CD4-positive, alpha-beta memory T cell (primary cell): ENCODE measurements at regions of chr17 and their contacts with region 1.

Region 1: GRCh38 chr17:40303009-40303657 is 5.8 kb upstream of the RARA start:
- DNase-seq: peak; percentile 62 to 70 (median 66)
- H3K4me3 ChIP-seq: no peak overlapping the region
- H3K4me3 Mint-ChIP-seq: no peak overlapping the region
- H3K27ac ChIP-seq: no peak overlapping the region
- H3K27ac Mint-ChIP-seq: peak overlapping the region in 5 of 7 donors; percentile 2 to 53 (median 13)
- H3K4me1 ChIP-seq: peaks cover 37% of the 10 kb centered on the region
- H3K4me1 Mint-ChIP-seq: peaks cover 14 to 17% (median 15%) of the 10 kb centered on the region in 4 donors
- H3K27me3 ChIP-seq: no peaks in the 10 kb centered on the region
- H3K27me3 Mint-ChIP-seq: no peaks in the 10 kb centered on the region

Region 2: DNA sequence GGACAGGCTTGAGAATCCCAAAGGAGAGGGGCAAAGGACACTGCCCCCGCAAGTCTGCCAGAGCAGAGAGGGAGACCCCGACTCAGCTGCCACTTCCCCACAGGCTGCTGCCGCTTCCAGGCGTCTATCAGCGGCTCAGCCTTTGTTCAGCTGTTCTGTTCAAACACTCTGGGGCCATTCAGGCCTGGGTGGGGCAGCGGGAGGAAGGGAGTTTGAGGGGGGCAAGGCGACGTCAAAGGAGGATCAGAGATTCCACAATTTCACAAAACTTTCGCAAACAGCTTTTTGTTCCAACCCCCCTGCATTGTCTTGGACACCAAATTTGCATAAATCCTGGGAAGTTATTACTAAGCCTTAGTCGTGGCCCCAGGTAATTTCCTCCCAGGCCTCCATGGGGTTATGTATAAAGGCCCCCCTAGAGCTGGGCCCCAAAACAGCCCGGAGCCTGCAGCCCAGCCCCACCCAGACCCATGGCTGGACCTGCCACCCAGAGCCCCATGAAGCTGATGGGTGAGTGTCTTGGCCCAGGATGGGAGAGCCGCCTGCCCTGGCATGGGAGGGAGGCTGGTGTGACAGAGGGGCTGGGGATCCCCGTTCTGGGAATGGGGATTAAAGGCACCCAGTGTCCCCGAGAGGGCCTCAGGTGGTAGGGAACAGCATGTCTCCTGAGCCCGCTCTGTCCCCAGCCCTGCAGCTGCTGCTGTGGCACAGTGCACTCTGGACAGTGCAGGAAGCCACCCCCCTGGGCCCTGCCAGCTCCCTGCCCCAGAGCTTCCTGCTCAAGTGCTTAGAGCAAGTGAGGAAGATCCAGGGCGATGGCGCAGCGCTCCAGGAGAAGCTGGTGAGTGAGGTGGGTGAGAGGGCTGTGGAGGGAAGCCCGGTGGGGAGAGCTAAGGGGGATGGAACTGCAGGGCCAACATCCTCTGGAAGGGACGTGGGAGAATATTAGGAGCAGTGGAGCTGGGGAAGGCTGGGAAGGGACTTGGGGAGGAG is 287.8 kb before region 1 on chr17 and contains the start of gene CSF3:
- CTCF ChIA-PET with region 1: no interaction called
- POLR2A ChIA-PET with region 1: no interaction called
- intact Hi-C with region 1: no loop called
- DNase-seq: no peak
- H3K4me3 ChIP-seq: no peak within 1 kb of the TSS
- H3K4me3 Mint-ChIP-seq: no peak within 1 kb of the TSS
- H3K27ac ChIP-seq: no peak within 1 kb of the TSS
- H3K27ac Mint-ChIP-seq: peak within 1 kb of the TSS in 2 of 7 donors; percentile 37 to 46
- H3K4me1 ChIP-seq: peaks cover 4% of the 10 kb centered on the region
- H3K4me1 Mint-ChIP-seq: peaks cover 0 to 6% (median 4%) of the 10 kb centered on the region in 4 donors
- H3K27me3 ChIP-seq: no peaks in the 10 kb centered on the region
- H3K27me3 Mint-ChIP-seq: peaks cover 0 to 2% of the 10 kb centered on the region in 2 donors
- total RNA-seq, gene CSF3: not detected

Region 3: GRCh38 chr17:40323391-40324381 is 20.6 kb after region 1 on chr17:
- CTCF ChIA-PET with region 1: interaction called, 252 read pairs
- POLR2A ChIA-PET with region 1: interaction called, 367 read pairs
- intact Hi-C with region 1: loop called (anchors 1 kb)
- DNase-seq: peak; percentile 73 to 97 (median 81)
- H3K4me3 ChIP-seq: peak overlapping the region; percentile 80 to 95
- H3K4me3 Mint-ChIP-seq: peak overlapping the region; percentile 91 to 98 (median 96)
- H3K27ac ChIP-seq: peak overlapping the region; percentile 99
- H3K27ac Mint-ChIP-seq: peak overlapping the region; percentile 96 to 100 (median 99)
- H3K4me1 ChIP-seq: peaks cover 91% of the 10 kb centered on the region
- H3K4me1 Mint-ChIP-seq: peaks cover 65 to 97% (median 77%) of the 10 kb centered on the region in 4 donors
- H3K27me3 ChIP-seq: no peaks in the 10 kb centered on the region
- H3K27me3 Mint-ChIP-seq: peaks cover 1 to 3% of the 10 kb centered on the region in 2 donors

Region 4: GRCh38 chr17:40340880-40341807 is 38.0 kb after region 1 on chr17:
- CTCF ChIA-PET with region 1: interaction called, 19 read pairs
- POLR2A ChIA-PET with region 1: interaction called, 1,054 read pairs
- intact Hi-C with region 1: loop called (anchors 1 kb)
- DNase-seq: peak; percentile 84 to 95 (median 87)
- H3K4me3 ChIP-seq: peak overlapping the region; percentile 51 to 69
- H3K4me3 Mint-ChIP-seq: peak overlapping the region; percentile 84 to 88 (median 86)
- H3K27ac ChIP-seq: peak overlapping the region; percentile 90
- H3K27ac Mint-ChIP-seq: peak overlapping the region; percentile 90 to 99 (median 98)
- H3K4me1 ChIP-seq: peaks cover 85% of the 10 kb centered on the region
- H3K4me1 Mint-ChIP-seq: peaks cover 40 to 81% (median 69%) of the 10 kb centered on the region in 4 donors
- H3K27me3 ChIP-seq: no peaks in the 10 kb centered on the region
- H3K27me3 Mint-ChIP-seq: no peaks in the 10 kb centered on the region

Region 5: GRCh38 chr17:40349920-40350909 is 47.1 kb after region 1 on chr17:
- CTCF ChIA-PET with region 1: interaction called, 573 read pairs
- POLR2A ChIA-PET with region 1: interaction called, 1,054 read pairs
- intact Hi-C with region 1: loop called (anchors 1 kb)
- DNase-seq: no peak
- H3K4me3 ChIP-seq: no peak overlapping the region
- H3K4me3 Mint-ChIP-seq: no peak overlapping the region
- H3K27ac ChIP-seq: no peak overlapping the region
- H3K27ac Mint-ChIP-seq: peak overlapping the region in 5 of 7 donors; percentile 46 to 95 (median 87)
- H3K4me1 ChIP-seq: peaks cover 33% of the 10 kb centered on the region
- H3K4me1 Mint-ChIP-seq: peaks cover 20 to 68% (median 37%) of the 10 kb centered on the region in 4 donors
- H3K27me3 ChIP-seq: no peaks in the 10 kb centered on the region
- H3K27me3 Mint-ChIP-seq: no peaks in the 10 kb centered on the region

Region 6: GRCh38 chr17:40362696-40363110 is 59.6 kb after region 1 on chr17:
- CTCF ChIA-PET with region 1: interaction called, 573 read pairs
- POLR2A ChIA-PET with region 1: interaction called, 1,054 read pairs
- intact Hi-C with region 1: no loop called
- DNase-seq: peak; percentile 72 to 76 (median 74)
- H3K4me3 ChIP-seq: peak overlapping the region in 1 of 2 donors; percentile 47
- H3K4me3 Mint-ChIP-seq: peak overlapping the region in 7 of 8 donors; percentile 39 to 82 (median 64)
- H3K27ac ChIP-seq: no peak overlapping the region
- H3K27ac Mint-ChIP-seq: peak overlapping the region in 3 of 7 donors; percentile 11 to 69 (median 57)
- H3K4me1 ChIP-seq: peaks cover 21% of the 10 kb centered on the region
- H3K4me1 Mint-ChIP-seq: peaks cover 5 to 12% (median 9%) of the 10 kb centered on the region in 4 donors
- H3K27me3 ChIP-seq: no peaks in the 10 kb centered on the region
- H3K27me3 Mint-ChIP-seq: peaks cover 0 to 7% of the 10 kb centered on the region in 2 donors

Region 7: DNA sequence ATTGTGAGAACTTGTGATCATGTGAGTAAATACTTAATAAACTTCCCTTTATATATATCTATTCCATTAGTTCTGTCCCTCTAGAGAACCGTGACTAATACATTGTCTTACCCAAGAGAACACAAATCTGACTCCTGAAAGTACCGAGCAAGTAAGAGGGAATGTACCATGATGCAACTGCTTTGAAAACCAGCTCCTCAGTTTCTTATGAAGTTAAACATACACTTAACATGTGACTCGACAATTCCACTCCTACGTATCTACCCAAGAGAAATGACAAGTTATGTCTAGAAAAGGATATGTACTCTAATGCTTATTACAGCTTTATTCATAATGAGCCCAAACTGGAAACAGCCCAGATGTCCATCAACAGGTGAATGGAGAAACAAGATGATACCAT is 70.2 kb after region 1 on chr17:
- CTCF ChIA-PET with region 1: no interaction called
- POLR2A ChIA-PET with region 1: no interaction called
- intact Hi-C with region 1: no loop called
- DNase-seq: no peak
- H3K4me3 ChIP-seq: no peak overlapping the region
- H3K4me3 Mint-ChIP-seq: no peak overlapping the region
- H3K27ac ChIP-seq: no peak overlapping the region
- H3K27ac Mint-ChIP-seq: no peak overlapping the region
- H3K4me1 ChIP-seq: no peaks in the 10 kb centered on the region
- H3K4me1 Mint-ChIP-seq: peaks cover 4 to 14% (median 8%) of the 10 kb centered on the region in 4 donors
- H3K27me3 ChIP-seq: no peaks in the 10 kb centered on the region
- H3K27me3 Mint-ChIP-seq: peaks cover 2 to 5% of the 10 kb centered on the region in 2 donors